Heart right ventricle (tissue), 16 donors: ENCODE measurements at regions of chr1 and their contacts with region 1.

Region 1: GRCh38 chr1:156583821-156584622 is 4.5 kb downstream of the TTC24 start:
- DNase-seq: peak in 1 of 2 donors; percentile 82
- ATAC-seq: peak in 6 of 8 donors; percentile 36 to 68 (median 61)
- H3K4me3 ChIP-seq: no peak overlapping the region
- H3K27ac ChIP-seq: no peak overlapping the region
- H3K4me1 ChIP-seq: peaks cover 0 to 10% (median 4%) of the 10 kb centered on the region in 9 donors
- H3K27me3 ChIP-seq: no peaks in the 10 kb centered on the region
- CTCF ChIP-seq: peak; percentile 91 to 95 (median 93)

Region 2: DNA sequence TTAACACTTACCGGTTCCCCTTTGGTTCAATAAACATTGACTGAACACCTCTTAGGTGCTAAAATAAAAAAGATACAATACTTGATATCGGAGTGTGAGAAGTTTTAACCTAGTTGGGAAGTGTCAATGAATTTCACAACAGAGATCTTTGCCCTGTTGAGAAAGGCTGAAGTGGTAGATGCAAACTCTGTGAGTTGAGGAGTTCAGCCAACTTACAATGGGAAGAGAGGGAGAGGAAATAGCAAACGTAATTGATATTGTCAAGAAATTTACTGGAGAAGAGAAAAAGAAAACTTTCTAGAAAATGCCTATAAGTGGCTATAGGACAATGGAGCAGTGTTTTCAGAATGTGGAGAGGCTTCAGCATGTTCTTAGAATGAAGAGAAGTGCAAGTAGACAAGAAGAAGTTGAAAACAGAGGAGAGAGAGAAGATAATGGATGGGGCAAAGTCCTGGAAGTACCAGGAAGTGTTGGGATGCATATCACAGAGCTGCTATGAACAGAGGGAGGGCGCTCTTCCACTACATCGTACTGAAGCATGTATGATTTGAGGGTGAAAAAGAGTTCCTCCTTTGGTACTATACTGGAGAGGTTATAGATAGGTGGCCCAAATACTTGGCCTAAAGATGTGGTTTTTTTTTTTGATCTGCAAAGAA is 132.4 kb before region 1 on chr1:
- intact Hi-C with region 1: loop called in 1 of 10 experiments (anchors 5 kb)
- DNase-seq: no peak
- ATAC-seq: no peak
- H3K4me3 ChIP-seq: no peak overlapping the region
- H3K27ac ChIP-seq: no peak overlapping the region
- H3K4me1 ChIP-seq: peaks cover 0 to 14% (median 5%) of the 10 kb centered on the region in 9 donors
- H3K27me3 ChIP-seq: peaks cover 0 to 5% (median 0%) of the 10 kb centered on the region in 7 donors
- CTCF ChIP-seq: no peak

Region 3: GRCh38 chr1:156465747-156466365 is 118.2 kb before region 1 on chr1:
- intact Hi-C with region 1: loop called in 1 of 10 experiments (anchors 10 kb)
- DNase-seq: no peak
- ATAC-seq: peak in 6 of 8 donors; percentile 3 to 31 (median 8)
- H3K4me3 ChIP-seq: no peak overlapping the region
- H3K27ac ChIP-seq: peak overlapping the region; percentile 20 to 81 (median 59)
- H3K4me1 ChIP-seq: peaks cover 28 to 87% (median 56%) of the 10 kb centered on the region in 9 donors
- H3K27me3 ChIP-seq: no peaks in the 10 kb centered on the region
- CTCF ChIP-seq: peak in 4 of 9 donors; percentile 7 to 31 (median 19)

Region 4: GRCh38 chr1:156510709-156511108 is 73.3 kb before region 1 on chr1:
- intact Hi-C with region 1: loop called in 2 of 10 experiments (anchors 5 kb)
- DNase-seq: peak; percentile 80 to 82
- ATAC-seq: peak; percentile 29 to 77 (median 64)
- H3K4me3 ChIP-seq: no peak overlapping the region
- H3K27ac ChIP-seq: peak overlapping the region; percentile 78 to 100 (median 100)
- H3K4me1 ChIP-seq: peaks cover 9 to 59% (median 41%) of the 10 kb centered on the region in 9 donors
- H3K27me3 ChIP-seq: no peaks in the 10 kb centered on the region
- CTCF ChIP-seq: no peak

Region 5: DNA sequence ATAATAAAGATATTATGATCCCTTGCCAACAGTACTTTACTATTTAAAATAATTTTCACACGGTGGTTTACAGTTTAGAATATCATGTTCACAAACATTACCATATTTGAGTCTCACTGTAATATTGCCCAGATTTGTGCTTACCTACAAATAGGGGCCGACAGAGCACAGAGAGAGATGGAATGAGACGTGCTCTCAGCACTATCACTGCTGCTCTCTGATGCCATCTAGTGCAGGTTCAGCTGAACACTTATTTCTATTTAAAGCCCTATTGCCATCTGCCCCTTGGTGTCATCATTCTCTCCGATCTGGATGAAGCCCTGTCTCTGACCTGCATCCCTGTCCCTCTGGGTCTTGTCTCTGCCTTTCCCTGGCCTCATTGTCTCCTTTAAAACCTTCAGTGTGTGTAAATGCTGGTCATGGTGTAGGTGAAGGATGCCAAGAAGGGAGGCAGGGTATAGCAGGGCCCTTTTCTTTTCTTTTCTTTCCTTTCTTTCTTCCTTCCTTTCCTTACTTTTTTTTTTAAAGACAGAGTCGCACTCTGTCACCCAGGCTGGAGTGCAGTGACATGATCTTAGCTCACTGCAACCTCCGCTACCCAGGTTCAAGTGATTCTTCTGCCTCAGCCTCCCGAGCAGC is 24.1 kb after region 1 on chr1:
- intact Hi-C with region 1: loop called in 3 of 10 experiments (anchors 2 to 5 kb)
- DNase-seq: peak in 1 of 2 donors; percentile 70
- ATAC-seq: peak; percentile 84 to 96 (median 93)
- H3K4me3 ChIP-seq: no peak overlapping the region
- H3K27ac ChIP-seq: no peak overlapping the region
- H3K4me1 ChIP-seq: peaks cover 0 to 9% (median 0%) of the 10 kb centered on the region in 9 donors
- H3K27me3 ChIP-seq: peaks cover 0 to 22% (median 0%) of the 10 kb centered on the region in 7 donors
- CTCF ChIP-seq: peak; percentile 64 to 86 (median 78)

Region 6: DNA sequence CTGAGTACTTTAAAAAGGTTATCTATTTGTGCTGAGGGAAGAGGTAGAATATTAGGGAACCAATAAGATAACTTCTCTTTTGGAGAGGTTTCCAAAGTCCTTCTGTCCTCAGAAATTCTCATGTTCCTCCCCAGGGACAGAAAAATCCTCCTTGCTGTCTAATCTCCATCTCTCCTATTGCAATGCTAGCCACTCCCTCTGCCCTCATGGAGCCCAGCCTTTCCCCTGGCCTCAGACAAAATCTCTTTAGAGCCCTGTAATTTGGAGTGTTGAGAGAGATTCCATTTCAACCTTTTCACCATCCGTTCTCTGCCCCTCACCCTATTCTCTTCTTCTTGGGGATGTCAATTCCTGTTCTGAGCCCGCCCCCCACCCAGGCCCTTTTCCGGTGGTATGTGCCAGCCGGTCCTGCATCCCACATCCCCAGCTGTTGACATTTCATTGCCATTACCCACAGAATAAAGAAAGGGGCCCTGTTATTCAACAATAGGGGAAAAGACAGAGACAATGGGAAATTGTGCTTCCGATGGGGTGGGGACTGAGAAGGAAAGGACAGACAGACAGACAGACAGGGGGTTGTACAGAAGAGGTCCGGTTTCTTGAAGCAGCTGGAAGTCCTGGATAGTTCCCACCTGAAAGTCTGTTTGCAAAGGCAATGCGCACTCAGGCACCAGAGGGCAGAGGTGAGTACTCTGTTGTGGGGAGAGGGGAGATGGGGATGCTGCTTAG is 35.0 kb after region 1 on chr1 and contains the start of gene HAPLN2:
- intact Hi-C with region 1: loop called in 2 of 10 experiments (anchors 5 kb)
- DNase-seq: no peak
- ATAC-seq: no peak
- H3K4me3 ChIP-seq: no peak within 1 kb of the TSS
- H3K27ac ChIP-seq: no peak within 1 kb of the TSS
- H3K4me1 ChIP-seq: peaks cover 10 to 36% (median 26%) of the 10 kb centered on the region in 9 donors
- H3K27me3 ChIP-seq: peaks cover 5 to 59% (median 8%) of the 10 kb centered on the region in 7 donors
- CTCF ChIP-seq: peak in 6 of 9 donors; percentile 18 to 42 (median 28)
- total RNA-seq, gene HAPLN2: 0.24 to 1.7 (median 0.77) TPM in 9 of 10 donors, not detected in the other

Region 7: DNA sequence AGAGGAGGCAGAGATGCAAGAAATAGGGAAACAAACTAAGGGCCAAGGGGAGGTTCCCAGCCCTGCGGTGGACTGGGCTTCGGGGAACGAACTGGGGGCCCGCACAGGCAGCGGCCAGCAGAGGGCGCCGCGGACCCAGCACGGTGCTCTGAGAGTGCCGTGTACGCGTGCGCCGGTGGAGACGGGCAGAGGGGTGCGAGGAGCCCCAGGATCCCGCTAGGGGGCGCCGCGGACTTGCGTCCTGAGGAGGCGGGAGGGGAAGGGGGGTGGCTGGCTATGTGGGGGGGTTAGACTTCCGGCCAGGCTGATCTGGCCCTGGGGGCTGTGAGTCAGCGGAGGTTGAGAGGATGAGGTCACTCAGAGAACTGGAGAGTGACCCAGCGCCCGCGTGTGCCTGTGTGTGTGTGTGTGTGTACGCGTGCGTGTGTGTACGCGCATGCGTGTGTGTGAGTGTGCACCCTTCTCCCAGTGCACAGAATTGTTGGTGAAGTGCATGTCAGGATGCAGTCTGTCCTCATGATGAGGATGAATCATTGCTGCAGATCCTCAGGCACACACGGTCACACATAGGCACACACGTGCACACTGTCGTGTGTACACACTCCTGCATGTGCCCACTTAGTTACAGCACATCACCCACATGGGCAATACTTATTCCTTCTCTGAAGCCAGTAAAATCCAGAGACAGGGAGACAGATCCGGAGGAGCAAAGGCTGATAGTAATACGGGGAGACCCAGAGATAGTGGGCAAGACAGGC is 76.2 kb after region 1 on chr1:
- intact Hi-C with region 1: loop called in 2 of 10 experiments (anchors 2 to 5 kb)
- DNase-seq: peak; percentile 97 to 98
- ATAC-seq: peak; percentile 82 to 91 (median 85)
- H3K4me3 ChIP-seq: peak overlapping the region in 8 of 10 donors; percentile 18 to 46 (median 39)
- H3K27ac ChIP-seq: peak overlapping the region; percentile 68 to 99 (median 96)
- H3K4me1 ChIP-seq: peaks cover 54 to 85% (median 80%) of the 10 kb centered on the region in 9 donors
- H3K27me3 ChIP-seq: peaks cover 0 to 28% (median 18%) of the 10 kb centered on the region in 7 donors
- CTCF ChIP-seq: peak; percentile 93 to 100 (median 99)

Region 8: DNA sequence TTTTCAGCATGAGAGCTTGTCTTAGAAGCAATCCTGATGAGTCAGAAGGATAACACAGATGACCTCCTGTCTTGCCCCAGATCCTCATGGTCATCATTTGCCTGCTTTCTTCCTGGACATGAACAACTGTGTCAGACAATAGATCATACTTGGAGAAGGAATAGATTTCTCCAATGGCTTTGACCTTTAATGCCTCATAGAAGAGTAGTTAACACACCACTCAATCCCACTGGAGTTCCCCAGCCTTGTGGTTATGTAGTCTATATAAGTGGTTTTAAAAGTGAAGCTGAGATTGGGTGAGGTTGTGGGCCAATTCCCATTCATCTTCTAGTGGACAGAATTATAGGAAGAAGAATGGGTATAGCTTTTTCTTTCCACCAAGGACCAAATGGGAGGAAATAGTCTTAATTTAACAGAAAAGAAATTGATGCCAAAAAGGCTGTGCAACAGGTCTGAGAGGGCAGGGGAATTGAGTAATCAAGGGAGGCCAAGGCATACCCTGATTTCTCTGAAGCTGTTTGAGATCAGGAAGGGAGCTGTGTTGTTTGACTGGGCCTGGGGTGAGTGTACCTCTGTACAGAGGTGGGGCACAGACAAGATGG is 197.7 kb after region 1 on chr1:
- intact Hi-C with region 1: no loop called
- DNase-seq: no peak
- ATAC-seq: peak in 1 of 8 donors; percentile 61
- H3K4me3 ChIP-seq: no peak overlapping the region
- H3K27ac ChIP-seq: no peak overlapping the region
- H3K4me1 ChIP-seq: peaks cover 2 to 56% (median 25%) of the 10 kb centered on the region in 9 donors
- H3K27me3 ChIP-seq: no peaks in the 10 kb centered on the region
- CTCF ChIP-seq: no peak